ENCODE measurements at regions of chr2 and their contacts with region 1.

Region 1: DNA sequence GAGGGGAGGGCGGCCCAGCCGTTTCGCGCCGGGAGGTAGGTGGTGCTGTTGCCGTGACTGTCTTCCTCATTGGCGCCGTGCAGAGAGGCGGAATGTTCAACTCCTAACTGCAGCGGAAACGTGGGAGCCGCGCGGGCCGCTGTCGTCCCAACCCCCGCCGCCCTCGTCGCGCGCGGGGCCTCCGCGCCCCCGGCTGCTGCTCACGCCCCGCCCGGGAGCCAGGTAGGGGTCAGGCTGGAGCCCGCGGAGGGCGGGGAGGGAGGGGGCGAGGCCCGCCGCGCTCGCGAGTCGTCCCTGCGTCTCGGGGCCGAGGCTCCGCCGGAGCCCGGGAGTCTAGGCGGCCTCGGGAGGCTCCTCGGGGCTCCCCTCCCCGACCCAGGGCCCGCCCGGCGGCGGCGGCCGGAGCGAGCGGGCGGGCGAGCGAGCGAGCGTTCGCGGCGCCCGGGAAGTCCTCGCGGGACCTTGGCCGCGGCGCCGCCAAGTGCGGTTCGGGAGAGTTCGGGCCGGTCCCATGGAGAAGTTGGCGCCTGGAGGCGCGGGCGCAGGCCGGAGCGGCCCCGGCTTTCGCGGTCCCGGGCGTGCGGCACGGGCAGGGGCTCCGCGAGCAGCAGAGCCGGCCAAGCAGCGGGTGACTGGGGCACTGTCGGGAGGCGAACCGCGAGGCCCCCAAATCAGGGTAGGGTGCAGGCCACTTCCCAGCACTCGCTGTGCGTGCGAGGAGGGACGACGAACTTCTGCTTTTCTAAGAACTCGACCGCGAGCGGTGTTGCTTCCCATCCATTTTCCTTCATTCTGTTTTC is at the start of gene MAP3K20:
- DNase-seq: peak; percentile 82 to 88 (median 86)
- H3K4me3 ChIP-seq: peak within 1 kb of the TSS; percentile 69
- H3K27ac ChIP-seq: peak within 1 kb of the TSS; percentile 99 to 100
- H3K4me1 ChIP-seq: peaks cover 3% of the 10 kb centered on the region
- H3K27me3 ChIP-seq: no peaks in the 10 kb centered on the region
- CTCF ChIP-seq: peak in 2 of 3 donors; percentile 60 to 63
- EP300 ChIP-seq: no peak
- POLR2A ChIP-seq: peak; percentile 83
- total RNA-seq, gene MAP3K20: 40.1 to 127 (median 107) TPM

Region 2: GRCh38 chr2:172995323-172996244 is 80.4 kb before region 1 on chr2:
- intact Hi-C with region 1: no loop called
- DNase-seq: peak; percentile 32 to 65 (median 49)
- H3K4me3 ChIP-seq: no peak overlapping the region
- H3K27ac ChIP-seq: peak overlapping the region in 1 of 2 donors; percentile 45
- H3K4me1 ChIP-seq: peaks cover 12% of the 10 kb centered on the region
- H3K27me3 ChIP-seq: no peaks in the 10 kb centered on the region
- CTCF ChIP-seq: no peak
- EP300 ChIP-seq: no peak
- POLR2A ChIP-seq: no peak

Region 3: DNA sequence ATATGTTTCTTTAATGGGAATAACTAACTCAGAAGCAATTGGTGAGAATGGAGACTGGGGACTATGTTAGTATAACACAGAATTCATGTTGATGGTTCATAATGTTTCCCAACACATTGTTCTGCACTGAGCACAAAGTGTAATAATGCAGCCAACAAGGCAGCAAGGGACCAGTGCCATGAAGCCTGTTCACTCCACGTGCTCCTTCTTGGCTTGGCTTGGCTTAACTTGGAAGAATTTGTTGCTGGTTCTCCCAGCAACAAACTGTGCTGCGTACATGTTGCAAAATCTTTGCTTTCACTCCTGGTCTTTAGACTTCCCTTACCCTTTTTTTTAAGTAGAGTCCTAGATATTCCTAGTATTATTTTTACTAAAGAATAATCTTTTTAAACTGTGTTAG is 129.4 kb after region 1 on chr2:
- intact Hi-C with region 1: loop called in 3 of 4 experiments (anchors 2 to 5 kb)
- DNase-seq: peak; percentile 76 to 91 (median 83)
- H3K4me3 ChIP-seq: no peak overlapping the region
- H3K27ac ChIP-seq: peak overlapping the region in 1 of 2 donors; percentile 31
- H3K4me1 ChIP-seq: peaks cover 3% of the 10 kb centered on the region
- H3K27me3 ChIP-seq: no peaks in the 10 kb centered on the region
- CTCF ChIP-seq: no peak
- EP300 ChIP-seq: peak; percentile 46
- POLR2A ChIP-seq: no peak

Measured in ovary (tissue), 10 donors.